ENCODE measurements at regions of chr1 and their contacts with region 1.

Region 1: DNA sequence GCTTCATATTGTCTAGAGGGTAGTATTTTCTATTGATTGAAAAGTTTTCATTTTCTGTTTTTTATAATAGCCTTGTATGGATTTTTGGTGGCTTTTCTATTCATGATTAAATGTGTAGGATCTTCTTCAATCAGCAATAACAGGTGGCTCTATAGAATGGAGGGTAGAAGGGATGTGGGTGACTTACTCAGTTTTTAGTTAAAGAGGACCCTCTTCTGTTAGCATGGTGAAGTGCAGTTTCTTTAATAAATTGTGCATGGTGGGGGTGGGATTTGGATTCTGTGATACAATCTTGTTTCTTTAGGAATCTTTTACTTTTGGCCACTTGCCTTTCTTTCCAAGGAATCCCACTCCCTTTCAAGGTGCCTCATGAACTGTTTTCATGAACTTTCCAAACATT is 64.7 kb downstream of the SLC35A3 start:
- DNase-seq: no peak
- ATAC-seq: no peak
- H3K4me3 ChIP-seq: no peak overlapping the region
- H3K27ac ChIP-seq: no peak overlapping the region
- H3K4me1 ChIP-seq: peaks cover 0 to 12% of the 10 kb centered on the region in 2 experiments; a peak in 2 of 4 replicates
- H3K27me3 ChIP-seq: no peaks in the 10 kb centered on the region
- CTCF ChIP-seq: peak; percentile 37 to 66 (median 39); a peak in 4 of 6 replicates
- POLR2A ChIP-seq: no peak
- RAD21 ChIP-seq: peak; percentile 70

Region 2: GRCh38 chr1:99808391-99809115 is 225.9 kb before region 1 on chr1:
- CTCF ChIA-PET with region 1: no interaction called
- POLR2A ChIA-PET with region 1: no interaction called
- RAD21 ChIA-PET with region 1: no interaction called
- intact Hi-C with region 1: loop called (anchors 1 kb)
- DNase-seq: peak; percentile 85
- ATAC-seq: peak; percentile 92
- H3K4me3 ChIP-seq: peak overlapping the region in 1 of 2 experiments; percentile 23; a peak in 1 of 4 replicates
- H3K27ac ChIP-seq: no peak overlapping the region
- H3K4me1 ChIP-seq: peaks cover 0 to 11% of the 10 kb centered on the region in 2 experiments; a peak in 2 of 4 replicates
- H3K27me3 ChIP-seq: no peaks in the 10 kb centered on the region
- CTCF ChIP-seq: peak; percentile 21 to 75 (median 71); a peak in 5 of 6 replicates
- POLR2A ChIP-seq: no peak
- RAD21 ChIP-seq: peak; percentile 95

Measured in HCT116 (cell line).